ENCODE measurements at regions of chr2 and their contacts with region 1.

Region 1: GRCh38 chr2:677056-677965 is at the start of gene TMEM18:
- DNase-seq: peak; percentile 99
- ATAC-seq: peak; percentile 71
- H3K4me3 Mint-ChIP-seq: peak within 1 kb of the TSS; percentile 91
- H3K27ac Mint-ChIP-seq: peak within 1 kb of the TSS; percentile 96
- H3K4me1 Mint-ChIP-seq: peaks cover 60% of the 10 kb centered on the region
- H3K27me3 Mint-ChIP-seq: no peaks in the 10 kb centered on the region
- CTCF ChIP-seq: no peak
- total RNA-seq, gene TMEM18: 30.8 and 34.6 TPM in 2 replicates

Region 2: GRCh38 chr2:341017-341542 is 336.2 kb before region 1 on chr2:
- CTCF ChIA-PET with region 1: no interaction called
- POLR2A ChIA-PET with region 1: no interaction called
- intact Hi-C with region 1: no loop called
- DNase-seq: no peak
- ATAC-seq: no peak
- H3K4me3 Mint-ChIP-seq: no peak overlapping the region
- H3K27ac Mint-ChIP-seq: no peak overlapping the region
- H3K4me1 Mint-ChIP-seq: peaks cover 22% of the 10 kb centered on the region
- H3K27me3 Mint-ChIP-seq: peaks cover 3% of the 10 kb centered on the region
- CTCF ChIP-seq: no peak

Region 3: GRCh38 chr2:437762-438393 is 239.4 kb before region 1 on chr2:
- CTCF ChIA-PET with region 1: no interaction called
- POLR2A ChIA-PET with region 1: no interaction called
- intact Hi-C with region 1: loop called (anchors 2 kb)
- DNase-seq: no peak
- ATAC-seq: peak; percentile 95
- H3K4me3 Mint-ChIP-seq: peak overlapping the region; percentile 81
- H3K27ac Mint-ChIP-seq: peak overlapping the region; percentile 87
- H3K4me1 Mint-ChIP-seq: peaks cover 56% of the 10 kb centered on the region
- H3K27me3 Mint-ChIP-seq: no peaks in the 10 kb centered on the region
- CTCF ChIP-seq: no peak

Region 4: DNA sequence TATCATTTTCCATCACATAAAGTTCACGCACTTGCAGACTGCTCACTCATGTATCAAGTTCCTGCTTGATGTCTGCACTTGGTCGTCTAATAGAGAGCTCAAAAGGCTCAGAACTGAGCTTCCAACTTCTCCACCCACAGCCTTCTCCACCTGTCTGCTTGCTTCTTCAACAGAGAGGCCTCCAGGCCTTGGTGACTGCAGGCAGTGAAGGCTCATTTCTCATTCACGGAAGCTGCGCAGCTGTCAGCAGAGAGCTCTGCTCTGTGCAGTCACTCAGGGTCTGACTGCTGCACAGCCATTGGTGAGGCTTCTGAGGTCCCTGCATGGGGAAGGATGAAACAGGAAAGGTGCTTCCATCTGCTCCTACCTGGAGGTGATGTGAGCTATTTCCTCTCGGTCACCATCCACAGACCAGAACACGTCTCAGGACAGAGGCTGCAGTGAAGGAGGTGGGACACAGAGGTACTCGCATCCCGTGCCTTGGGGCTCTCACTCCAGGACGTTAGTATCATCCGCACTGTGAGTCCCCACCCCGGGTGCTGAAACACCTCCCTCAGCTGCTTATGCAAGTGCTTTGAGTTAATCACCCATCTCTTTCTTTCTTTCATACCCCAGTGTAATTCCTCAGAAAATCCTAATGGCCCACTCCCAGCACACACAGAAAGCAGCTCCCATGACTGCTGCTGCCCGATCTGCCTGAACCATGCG is 126.3 kb before region 1 on chr2:
- CTCF ChIA-PET with region 1: no interaction called
- POLR2A ChIA-PET with region 1: no interaction called
- intact Hi-C with region 1: loop called (anchors 2 kb)
- DNase-seq: no peak
- ATAC-seq: peak; percentile 78
- H3K4me3 Mint-ChIP-seq: peak overlapping the region; percentile 32
- H3K27ac Mint-ChIP-seq: peak overlapping the region; percentile 62
- H3K4me1 Mint-ChIP-seq: peaks cover 54% of the 10 kb centered on the region
- H3K27me3 Mint-ChIP-seq: peaks cover 4% of the 10 kb centered on the region
- CTCF ChIP-seq: no peak

Region 5: DNA sequence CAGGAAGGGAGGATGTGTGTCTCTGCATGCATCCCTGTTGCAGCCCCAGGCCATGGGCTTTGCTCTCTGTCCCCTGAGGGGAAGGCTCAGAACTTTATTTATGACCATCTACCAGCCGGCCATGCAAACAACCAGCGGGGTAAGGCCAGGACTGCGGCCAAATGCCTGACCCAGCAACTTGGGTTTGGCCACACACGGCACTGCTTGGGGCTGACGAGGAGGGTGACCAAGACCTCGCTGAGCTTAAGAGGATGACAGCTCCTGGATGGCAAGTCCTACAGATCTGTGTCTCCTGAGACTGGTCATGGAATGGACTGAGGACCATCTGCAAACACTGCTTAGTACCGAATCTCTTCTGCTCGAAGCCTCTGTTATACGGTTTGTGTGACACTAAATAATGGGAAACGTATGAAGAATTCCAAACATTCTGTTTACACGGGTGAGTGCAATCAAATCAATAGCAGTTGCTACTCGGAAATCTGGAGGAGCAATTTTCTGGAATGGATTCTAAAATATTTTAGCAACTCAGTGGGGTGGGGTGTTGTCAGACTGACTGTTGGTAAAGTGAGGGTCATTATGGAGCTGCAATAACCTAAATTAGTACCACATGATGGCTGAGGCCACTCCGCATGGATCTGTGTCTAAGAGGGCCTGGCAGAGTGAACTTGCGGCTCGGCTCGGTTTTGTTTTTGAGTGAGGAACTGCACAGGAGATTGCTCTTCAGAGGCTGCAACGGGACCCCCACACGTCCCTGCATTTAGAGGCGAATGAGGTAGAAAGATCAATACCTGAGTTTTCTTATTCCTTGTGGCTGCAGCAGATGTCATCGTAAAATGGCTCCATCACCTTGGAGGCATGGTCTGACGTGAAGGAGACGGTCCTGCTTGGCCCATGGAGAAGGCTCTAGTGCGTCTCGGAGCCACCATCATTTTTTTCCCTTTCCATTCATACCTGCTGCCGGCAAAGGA is 26.7 kb before region 1 on chr2:
- CTCF ChIA-PET with region 1: no interaction called
- POLR2A ChIA-PET with region 1: no interaction called
- intact Hi-C with region 1: no loop called
- DNase-seq: no peak
- ATAC-seq: no peak
- H3K4me3 Mint-ChIP-seq: no peak overlapping the region
- H3K27ac Mint-ChIP-seq: no peak overlapping the region
- H3K4me1 Mint-ChIP-seq: no peaks in the 10 kb centered on the region
- H3K27me3 Mint-ChIP-seq: peaks cover 9% of the 10 kb centered on the region
- CTCF ChIP-seq: no peak

Region 6: DNA sequence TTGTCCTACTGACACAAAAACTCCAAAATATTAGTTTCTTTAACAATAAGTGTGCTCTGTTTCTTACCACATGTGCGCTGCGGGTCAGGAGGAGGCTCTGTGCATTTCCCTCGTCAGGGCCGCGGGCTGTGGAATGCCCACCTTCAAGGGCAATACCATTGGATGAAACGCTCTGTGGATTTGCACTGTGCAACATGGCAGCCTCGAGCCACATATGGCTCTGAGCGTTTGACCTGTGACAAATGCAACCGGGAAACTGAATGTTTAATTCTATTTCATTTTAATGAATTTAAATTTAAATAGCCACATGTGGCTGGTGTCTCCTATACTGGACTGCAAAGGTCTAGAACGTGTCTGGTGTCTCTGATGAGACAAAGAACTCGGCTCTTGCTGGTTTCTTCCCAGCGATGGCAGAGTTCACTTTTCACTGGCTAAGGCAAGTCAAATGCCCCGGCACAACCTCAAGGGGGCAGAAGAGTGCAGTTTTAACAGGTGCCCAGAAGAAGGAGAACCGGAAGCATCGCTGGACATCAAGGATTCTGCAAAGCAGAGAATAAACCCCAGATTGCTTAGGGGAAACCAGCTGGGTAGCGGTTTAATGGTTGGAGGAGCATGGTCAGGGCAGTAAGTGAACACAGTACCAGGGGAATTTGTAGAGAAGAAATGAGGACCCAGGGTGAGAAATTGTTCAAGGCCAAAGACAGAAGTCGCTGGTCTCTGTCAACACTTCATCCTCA is 36.9 kb after region 1 on chr2:
- CTCF ChIA-PET with region 1: no interaction called
- POLR2A ChIA-PET with region 1: interaction called, 3 read pairs
- intact Hi-C with region 1: loop called (anchors 1 kb)
- DNase-seq: no peak
- ATAC-seq: peak; percentile 82
- H3K4me3 Mint-ChIP-seq: peak overlapping the region; percentile 20
- H3K27ac Mint-ChIP-seq: no peak overlapping the region
- H3K4me1 Mint-ChIP-seq: peaks cover 18% of the 10 kb centered on the region
- H3K27me3 Mint-ChIP-seq: peaks cover 28% of the 10 kb centered on the region
- CTCF ChIP-seq: no peak

Region 7: GRCh38 chr2:893311-893710 is 216.0 kb after region 1 on chr2:
- CTCF ChIA-PET with region 1: no interaction called
- POLR2A ChIA-PET with region 1: no interaction called
- intact Hi-C with region 1: no loop called
- DNase-seq: no peak
- ATAC-seq: no peak
- H3K4me3 Mint-ChIP-seq: no peak overlapping the region
- H3K27ac Mint-ChIP-seq: no peak overlapping the region
- H3K4me1 Mint-ChIP-seq: no peaks in the 10 kb centered on the region
- H3K27me3 Mint-ChIP-seq: peaks cover 14% of the 10 kb centered on the region
- CTCF ChIP-seq: no peak

Measured in activated B cell treated with CpG ODN at 0.5 μM for 24 hours (primary cell).